Stomach (tissue), 19 donors: ENCODE measurements at regions of chr1 and their contacts with region 1.

Region 1: DNA sequence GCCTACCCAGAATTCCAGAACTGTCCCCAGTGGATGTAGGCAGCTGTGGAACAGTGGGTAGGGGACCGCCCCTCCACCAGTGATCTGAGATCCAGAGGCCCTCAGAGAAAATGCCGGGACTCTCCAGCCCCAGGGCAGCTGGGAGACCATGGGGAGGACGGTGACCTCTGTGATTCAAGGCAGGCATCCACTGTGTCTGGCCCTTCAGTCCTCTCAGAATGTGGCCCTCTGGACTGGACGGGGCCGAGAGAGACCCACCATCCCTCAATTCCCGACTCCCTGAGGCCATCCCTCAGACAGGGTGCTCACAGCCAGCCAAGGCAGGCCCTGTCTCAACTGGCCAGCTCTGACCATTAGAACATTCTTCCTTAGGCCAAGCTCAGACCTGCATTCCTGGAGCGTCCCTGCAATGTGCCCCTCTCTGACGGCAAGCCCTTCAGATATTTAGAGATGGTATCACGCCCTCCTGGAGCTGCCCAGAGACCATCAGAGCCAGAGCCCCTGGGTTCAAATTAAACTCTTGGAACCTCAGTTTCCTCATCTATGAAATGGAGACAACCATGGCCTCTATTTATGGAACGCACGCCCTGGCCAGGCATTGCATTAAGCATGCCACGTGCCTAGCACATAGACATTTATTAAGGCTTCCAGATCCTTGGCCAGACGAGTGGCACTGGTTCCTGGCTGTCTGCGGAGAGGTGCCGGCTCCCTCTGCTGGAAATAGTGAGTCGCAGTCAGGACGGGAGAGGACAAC is 9.6 kb upstream of the EPS8L3 start:
- DNase-seq: peak; percentile 86 to 95
- H3K4me3 ChIP-seq: no peak overlapping the region
- H3K27ac ChIP-seq: peak overlapping the region in 1 of 5 donors; percentile 24
- H3K4me1 ChIP-seq: peaks cover 6 to 23% (median 15%) of the 10 kb centered on the region in 4 donors
- H3K27me3 ChIP-seq: no peaks in the 10 kb centered on the region
- CTCF ChIP-seq: peak in 5 of 7 experiments; percentile 74 to 97 (median 82)
- EP300 ChIP-seq: no peak
- POLR2A ChIP-seq: no peak

Region 2: DNA sequence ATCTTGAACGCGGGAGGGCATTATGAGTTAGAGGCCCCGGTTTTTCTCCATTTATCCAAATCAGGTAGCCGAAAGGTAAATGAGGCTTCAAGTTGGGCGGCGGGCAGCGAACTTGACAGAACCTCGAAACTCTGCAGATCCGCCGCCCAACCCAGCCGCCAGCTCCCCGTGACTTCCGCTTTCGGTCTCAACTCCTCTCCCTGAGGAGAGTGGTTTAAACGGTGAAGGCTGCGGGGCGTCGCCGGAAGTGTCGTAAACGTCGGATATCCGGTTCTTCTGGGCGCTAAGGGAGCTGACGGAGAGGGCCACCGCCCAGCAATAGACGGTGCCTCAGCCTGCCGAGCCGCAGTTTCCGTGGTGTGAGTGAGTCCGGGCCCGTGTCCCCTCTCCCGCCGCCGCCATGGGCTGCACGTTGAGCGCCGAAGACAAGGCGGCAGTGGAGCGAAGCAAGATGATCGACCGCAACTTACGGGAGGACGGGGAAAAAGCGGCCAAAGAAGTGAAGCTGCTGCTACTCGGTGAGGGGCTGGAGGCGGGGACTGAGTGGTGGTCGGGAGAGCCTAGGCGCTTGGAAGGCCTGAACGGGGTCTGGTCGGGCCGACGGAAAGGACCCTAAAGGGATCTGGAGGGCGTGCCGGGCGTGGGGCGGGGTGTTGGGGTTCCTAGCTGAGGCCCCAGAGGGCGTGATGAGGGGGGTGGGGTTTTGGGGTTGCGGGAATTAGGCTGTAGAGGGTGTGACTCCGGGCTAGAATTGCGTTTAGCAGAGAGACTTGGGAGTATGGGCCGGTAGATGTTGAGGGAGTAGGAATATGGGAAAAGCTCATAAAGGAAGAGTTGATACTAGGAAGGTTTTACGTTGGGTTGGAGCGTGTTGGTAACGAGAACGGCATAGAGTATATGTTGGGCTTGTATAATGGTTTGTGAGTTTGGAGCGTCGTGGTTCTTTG is 224.7 kb before region 1 on chr1 and contains the start of gene GNAI3:
- intact Hi-C with region 1: loop called (anchors 10 kb)
- DNase-seq: peak; percentile 98 to 99
- H3K4me3 ChIP-seq: peak within 1 kb of the TSS; percentile 59 to 94 (median 86)
- H3K27ac ChIP-seq: peak within 1 kb of the TSS; percentile 92 to 98 (median 98)
- H3K4me1 ChIP-seq: peaks cover 18 to 62% (median 41%) of the 10 kb centered on the region in 4 donors
- H3K27me3 ChIP-seq: no peaks in the 10 kb centered on the region
- CTCF ChIP-seq: no peak
- EP300 ChIP-seq: no peak
- POLR2A ChIP-seq: peak in 2 of 4 donors; percentile 97 to 98
- total RNA-seq, gene GNAI3: 0.58 to 12.7 (median 3.2) TPM

Region 3: GRCh38 chr1:109643385-109644230 is 129.7 kb before region 1 on chr1:
- intact Hi-C with region 1: loop called (anchors 5 kb)
- DNase-seq: peak; percentile 90 to 92
- H3K4me3 ChIP-seq: no peak overlapping the region
- H3K27ac ChIP-seq: no peak overlapping the region
- H3K4me1 ChIP-seq: peaks cover 11 to 32% (median 19%) of the 10 kb centered on the region in 4 donors
- H3K27me3 ChIP-seq: no peaks in the 10 kb centered on the region
- CTCF ChIP-seq: peak in 5 of 7 experiments; percentile 74 to 90 (median 87)
- EP300 ChIP-seq: no peak
- POLR2A ChIP-seq: no peak

Region 4: DNA sequence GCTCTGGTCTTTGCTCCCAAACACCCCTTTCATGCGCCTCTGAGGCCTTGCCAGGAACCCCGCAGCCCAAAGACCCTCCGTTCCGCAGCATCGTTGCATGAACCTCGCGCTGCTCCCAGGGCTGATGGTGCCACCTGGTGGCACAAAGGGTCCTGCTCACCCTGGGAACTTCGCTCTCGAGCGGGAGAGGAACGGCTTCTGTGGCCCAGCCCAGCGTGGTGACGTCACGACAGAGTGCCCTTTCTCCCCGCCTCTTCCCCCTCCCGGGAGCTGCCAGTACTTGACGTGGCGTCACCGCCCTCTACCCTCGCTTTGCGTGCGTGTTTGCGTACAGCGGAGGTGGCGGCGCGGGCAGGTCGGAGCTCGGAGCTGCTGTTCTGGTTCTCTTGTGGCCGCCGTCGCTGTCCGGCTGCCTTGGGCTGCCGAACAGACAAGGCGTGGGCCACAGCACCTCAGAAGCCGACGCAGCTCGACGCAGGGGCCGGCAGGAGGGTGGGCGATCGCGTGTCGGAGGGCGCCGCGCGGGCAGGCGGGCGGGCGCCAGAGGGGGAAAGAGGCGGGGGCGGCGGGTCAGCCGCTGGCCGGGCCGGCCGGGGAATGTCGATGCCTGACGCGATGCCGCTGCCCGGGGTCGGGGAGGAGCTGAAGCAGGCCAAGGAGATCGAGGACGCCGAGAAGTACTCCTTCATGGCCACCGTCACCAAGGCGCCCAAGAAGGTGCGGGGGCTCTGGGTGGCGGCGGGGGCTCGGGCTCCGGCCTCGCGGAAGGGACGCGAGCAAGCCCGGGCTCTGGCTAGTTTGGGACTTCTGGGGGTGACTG is 211.3 kb after region 1 on chr1 and contains the start of gene AHCYL1:
- intact Hi-C with region 1: loop called (anchors 2 kb)
- DNase-seq: peak; percentile 100
- H3K4me3 ChIP-seq: peak within 1 kb of the TSS; percentile 64 to 75 (median 70)
- H3K27ac ChIP-seq: peak within 1 kb of the TSS; percentile 94 to 99 (median 97)
- H3K4me1 ChIP-seq: peaks cover 49 to 74% (median 56%) of the 10 kb centered on the region in 4 donors
- H3K27me3 ChIP-seq: no peaks in the 10 kb centered on the region
- CTCF ChIP-seq: peak in 6 of 7 experiments; percentile 81 to 100 (median 95)
- EP300 ChIP-seq: peak; percentile 83
- POLR2A ChIP-seq: peak in 2 of 4 donors; percentile 96 to 98
- total RNA-seq, gene AHCYL1: 31.0 to 76.3 (median 73.4) TPM

Region 5: GRCh38 chr1:110136911-110137310 is 363.6 kb after region 1 on chr1:
- intact Hi-C with region 1: no loop called
- DNase-seq: peak; percentile 28 to 69
- H3K4me3 ChIP-seq: no peak overlapping the region
- H3K27ac ChIP-seq: no peak overlapping the region
- H3K4me1 ChIP-seq: peaks cover 0 to 8% (median 2%) of the 10 kb centered on the region in 4 donors
- H3K27me3 ChIP-seq: peaks cover 0 to 50% (median 13%) of the 10 kb centered on the region in 3 donors
- CTCF ChIP-seq: no peak
- EP300 ChIP-seq: no peak
- POLR2A ChIP-seq: no peak